Colonic mucosa (tissue), 4 donors: ENCODE measurements at regions of chr10 and their contacts with region 1.

Region 1: DNA sequence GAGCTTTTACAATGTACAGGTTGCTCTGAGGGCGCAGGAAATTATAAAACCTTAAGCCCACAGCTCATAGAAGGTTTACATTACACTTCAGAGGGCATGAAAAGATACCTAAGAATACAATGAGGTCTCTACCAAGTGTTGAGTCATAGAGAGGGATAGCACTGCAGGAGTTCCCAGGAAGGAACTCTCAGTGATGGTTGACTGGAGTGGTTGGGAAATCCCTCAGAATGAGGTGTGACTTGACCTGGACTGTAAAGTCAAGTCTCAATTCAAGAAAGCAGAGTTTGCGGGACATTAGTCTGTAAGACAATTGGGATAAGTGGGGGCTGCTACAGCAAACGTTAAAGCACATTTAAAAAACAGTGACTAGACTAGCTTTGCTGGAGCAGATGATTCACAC is 21.9 kb downstream of the TNKS2 start:
- DNase-seq: no peak
- H3K4me3 ChIP-seq: no peak overlapping the region
- H3K27ac ChIP-seq: no peak overlapping the region
- H3K4me1 ChIP-seq: no peaks in the 10 kb centered on the region
- H3K27me3 ChIP-seq: no peaks in the 10 kb centered on the region
- CTCF ChIP-seq: no peak

Region 2: GRCh38 chr10:91864099-91864498 is 44.0 kb after region 1 on chr10:
- intact Hi-C with region 1: loop called (anchors 5 kb)
- DNase-seq: peak; percentile 48
- H3K4me3 ChIP-seq: no peak overlapping the region
- H3K27ac ChIP-seq: no peak overlapping the region
- H3K4me1 ChIP-seq: no peaks in the 10 kb centered on the region
- H3K27me3 ChIP-seq: no peaks in the 10 kb centered on the region
- CTCF ChIP-seq: no peak

Region 3: DNA sequence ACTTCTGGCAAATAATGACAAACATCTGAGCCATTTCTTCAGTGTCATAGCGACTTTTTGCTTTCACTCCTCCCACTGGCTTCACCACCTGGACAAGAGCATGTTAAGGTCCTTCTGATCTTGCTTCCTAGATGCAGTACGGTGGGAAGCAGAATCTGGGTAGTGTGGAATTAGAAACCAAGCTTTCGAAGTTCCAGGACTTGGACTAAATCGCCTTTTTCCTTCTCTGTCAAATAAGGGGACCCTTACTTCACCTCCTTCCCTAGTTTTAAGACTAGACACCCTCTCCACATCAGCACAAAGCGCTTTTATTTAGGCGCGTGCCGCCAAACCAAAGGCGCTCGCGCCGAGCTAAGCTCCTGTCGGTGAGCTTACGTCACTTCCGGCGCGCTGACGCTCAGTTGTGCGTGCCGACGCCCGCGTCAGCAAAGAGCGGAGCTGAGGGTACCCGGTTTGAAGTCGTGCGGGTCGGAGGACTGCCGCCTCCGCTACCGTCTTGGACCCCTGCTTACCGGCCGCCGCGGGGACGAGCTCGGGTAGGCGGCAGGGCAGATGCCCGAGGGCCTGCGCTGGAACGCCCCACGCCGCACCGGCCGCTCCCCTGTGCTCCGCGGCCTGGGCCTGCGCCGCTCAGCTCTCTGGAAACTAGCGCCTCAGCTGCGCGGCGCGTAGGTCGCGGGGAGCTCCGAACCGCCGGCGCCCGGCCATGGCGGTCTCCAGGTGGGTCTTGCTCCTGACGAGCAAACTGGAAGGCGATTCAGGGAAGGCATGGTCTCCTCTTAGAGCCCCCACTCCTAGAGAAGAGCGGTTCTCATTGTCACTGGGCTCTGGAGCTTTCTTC is 103.4 kb after region 1 on chr10 and contains the start of gene BTAF1:
- intact Hi-C with region 1: no loop called
- DNase-seq: peak; percentile 94
- H3K4me3 ChIP-seq: peak within 1 kb of the TSS; percentile 91
- H3K27ac ChIP-seq: peak within 1 kb of the TSS; percentile 90
- H3K4me1 ChIP-seq: peaks cover 7% of the 10 kb centered on the region
- H3K27me3 ChIP-seq: no peaks in the 10 kb centered on the region
- CTCF ChIP-seq: no peak
- total RNA-seq, gene BTAF1: 20.7 to 25.0 TPM

Region 4: DNA sequence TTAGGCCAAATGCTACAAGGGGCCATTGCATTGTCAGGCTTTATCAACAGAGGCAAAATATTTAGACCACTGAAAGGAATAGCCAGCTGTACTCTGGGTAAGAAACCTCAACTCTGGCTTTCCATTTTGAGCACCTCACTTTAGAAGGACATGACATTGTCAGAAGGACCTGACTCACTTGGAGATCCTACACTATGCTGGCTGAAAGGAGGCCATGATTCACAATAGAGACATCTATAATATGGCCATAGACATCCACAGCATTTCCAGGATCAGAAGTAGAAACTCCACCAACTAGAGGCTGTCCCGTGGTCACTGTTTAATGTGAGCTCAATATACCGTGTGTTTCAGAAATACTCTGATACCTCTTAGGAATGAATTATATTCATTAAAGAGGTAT is 244.4 kb after region 1 on chr10:
- intact Hi-C with region 1: no loop called
- DNase-seq: no peak
- H3K4me3 ChIP-seq: no peak overlapping the region
- H3K27ac ChIP-seq: no peak overlapping the region
- H3K4me1 ChIP-seq: no peaks in the 10 kb centered on the region
- H3K27me3 ChIP-seq: no peaks in the 10 kb centered on the region
- CTCF ChIP-seq: no peak